AG04450 (cell line): ENCODE measurements at regions of chr22 and their contacts with region 1.

Region 1: DNA sequence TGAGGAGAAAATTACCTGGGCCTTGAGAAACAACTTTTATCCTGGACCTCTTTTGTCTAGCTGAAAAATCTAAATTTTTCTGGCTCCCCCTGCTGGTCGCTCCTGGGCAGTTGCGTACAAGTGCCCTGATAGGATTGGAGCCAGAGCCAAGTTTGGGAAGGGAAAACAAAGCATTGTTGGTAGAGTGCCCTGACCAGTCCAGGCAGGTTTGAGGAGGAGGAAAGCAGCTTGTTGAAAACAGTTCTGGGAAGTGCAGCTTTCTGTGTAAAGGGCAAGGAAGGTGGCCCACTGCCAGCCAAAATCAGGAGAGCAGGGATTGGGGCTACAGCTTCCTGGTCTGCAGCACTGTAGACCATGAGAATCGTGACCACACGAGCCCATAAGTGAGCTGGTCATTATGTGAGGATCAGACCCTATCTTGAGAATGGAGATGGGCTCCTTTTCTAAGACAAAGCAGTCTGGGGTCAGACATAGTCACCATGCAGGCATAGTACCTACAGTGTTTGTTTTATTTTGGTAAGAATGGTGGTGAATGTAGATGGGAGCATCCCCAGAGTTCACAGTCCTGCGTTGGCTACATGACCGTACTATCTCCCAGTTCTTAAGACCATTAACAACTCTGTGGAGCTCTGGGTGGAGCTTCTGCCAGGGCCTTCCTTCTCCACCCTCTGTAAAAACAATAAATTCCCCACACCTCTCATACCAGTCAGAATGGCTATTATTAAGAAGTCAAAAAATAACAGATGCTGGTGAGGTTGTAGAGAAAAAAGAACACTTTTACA is 21.3 kb upstream of the PIK3IP1 start:
- DNase-seq: peak; percentile 33
- H3K4me3 ChIP-seq: no peak overlapping the region
- H3K27ac ChIP-seq: no peak overlapping the region
- H3K27me3 ChIP-seq: no peaks in the 10 kb centered on the region
- CTCF ChIP-seq: peak; percentile 91

Region 2: DNA sequence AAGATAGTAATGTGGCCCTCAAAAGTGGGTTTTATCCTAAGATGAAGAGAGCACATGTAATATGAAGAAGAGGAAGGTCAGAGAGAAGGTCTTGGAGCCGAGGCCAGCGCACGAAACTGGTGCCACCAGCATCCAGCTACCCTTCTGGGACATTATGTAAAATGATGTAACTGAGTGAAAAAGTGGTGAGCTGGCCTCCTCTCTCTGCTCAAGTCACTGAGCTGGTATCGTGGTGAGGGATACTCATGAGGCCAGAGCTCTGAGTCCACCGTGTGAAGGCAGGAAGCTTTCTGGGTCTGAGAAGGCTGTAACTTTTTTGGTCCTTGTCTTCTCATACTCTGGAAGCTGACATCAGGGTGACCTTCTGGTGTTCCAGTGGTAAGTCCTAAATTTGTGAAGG is 128.5 kb before region 1 on chr22:
- CTCF ChIA-PET with region 1: no interaction called
- POLR2A ChIA-PET with region 1: no interaction called
- DNase-seq: no peak
- H3K4me3 ChIP-seq: no peak overlapping the region
- H3K27ac ChIP-seq: no peak overlapping the region
- H3K27me3 ChIP-seq: no peaks in the 10 kb centered on the region
- CTCF ChIP-seq: no peak

Region 3: DNA sequence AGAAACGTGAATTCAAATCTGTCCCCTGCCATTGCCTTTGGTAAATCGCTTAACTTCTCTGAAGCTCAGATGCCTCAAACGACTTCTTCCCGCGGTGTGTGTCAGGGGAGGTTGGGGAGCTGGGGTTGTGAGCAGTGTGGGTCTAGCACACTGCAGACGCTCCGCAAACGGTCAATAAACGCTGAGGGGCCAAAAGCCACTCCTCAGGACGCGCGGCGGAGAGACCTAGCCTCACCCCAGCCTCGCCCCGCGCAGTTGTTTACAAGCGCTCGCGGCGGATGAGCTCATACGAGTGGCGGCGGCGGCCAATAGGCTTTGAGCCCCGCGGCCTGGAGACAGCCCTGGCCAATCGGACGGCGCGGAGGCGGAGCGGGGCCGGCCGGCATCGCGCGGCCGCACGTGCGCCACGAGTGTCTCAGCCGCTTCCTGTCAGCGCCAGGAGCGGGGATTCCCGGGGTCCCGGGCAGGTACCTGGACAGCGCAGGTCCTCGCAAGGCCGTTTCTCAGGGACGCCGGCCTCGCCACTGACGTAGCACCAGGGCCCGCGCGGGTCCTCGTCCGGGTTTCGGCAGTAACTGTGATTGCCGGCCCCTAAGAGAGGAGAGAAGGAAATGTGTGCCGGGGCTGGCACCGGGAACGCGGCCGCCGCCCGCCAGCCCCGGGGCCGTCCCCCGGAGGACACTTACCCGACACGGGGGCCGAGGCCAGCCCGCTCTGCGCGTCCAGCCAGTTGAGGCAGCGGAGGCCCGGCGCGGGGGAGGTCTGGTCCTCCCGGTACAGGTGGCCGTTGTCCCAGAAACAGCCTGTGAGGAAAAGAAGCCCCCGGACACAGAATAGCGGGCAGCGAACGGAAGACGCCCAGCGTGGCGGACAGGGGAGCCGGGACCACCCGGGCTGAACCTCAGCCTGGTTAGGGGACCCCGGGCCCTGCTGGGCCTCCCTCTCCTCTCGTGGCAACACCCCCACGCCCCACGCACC is 22.8 kb before region 1 on chr22:
- CTCF ChIA-PET with region 1: interaction called, 100 read pairs
- POLR2A ChIA-PET with region 1: interaction called, 3 read pairs
- DNase-seq: peak; percentile 57
- H3K4me3 ChIP-seq: peak overlapping the region; percentile 87
- H3K27ac ChIP-seq: peak overlapping the region; percentile 61
- H3K27me3 ChIP-seq: no peaks in the 10 kb centered on the region
- CTCF ChIP-seq: no peak

Region 4: DNA sequence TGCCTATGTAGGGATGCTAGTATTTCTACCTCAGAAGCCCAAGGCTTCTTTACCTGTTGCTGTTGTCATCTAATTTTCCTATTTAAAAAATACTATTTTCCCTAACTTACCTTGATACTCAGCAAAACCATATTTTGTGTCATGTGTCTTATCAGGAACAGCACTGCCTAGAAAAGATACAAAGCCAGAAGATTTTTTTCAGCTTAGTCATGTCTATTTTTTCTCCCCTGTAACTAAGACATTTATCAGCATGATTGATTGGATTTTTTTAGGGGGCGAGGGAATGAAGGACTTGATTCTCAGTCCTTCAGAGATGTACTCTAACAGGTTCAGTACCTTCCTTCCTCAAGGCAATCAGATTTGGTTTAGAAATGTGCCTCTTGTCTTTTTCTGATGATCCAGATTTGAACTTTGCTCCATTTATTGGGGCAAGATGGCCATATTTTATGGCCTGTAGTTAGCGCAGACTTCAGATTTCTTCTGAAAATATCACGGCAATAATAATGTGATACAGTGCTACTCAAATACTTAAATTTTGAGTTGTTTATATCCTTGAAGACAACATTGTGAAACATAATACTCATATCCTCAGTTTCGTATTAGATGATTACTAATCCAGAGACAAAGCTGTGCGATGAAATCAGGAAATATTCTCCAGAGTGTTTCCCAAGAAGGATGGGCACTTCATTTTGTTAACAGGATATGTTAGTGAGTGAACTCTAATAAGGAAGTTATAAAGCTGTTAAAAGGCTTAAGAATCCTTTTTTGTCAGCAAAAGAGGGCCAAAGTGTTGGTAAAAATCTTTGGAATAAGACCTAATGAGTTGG is 17.5 kb before region 1 on chr22:
- CTCF ChIA-PET with region 1: interaction called, 100 read pairs
- POLR2A ChIA-PET with region 1: no interaction called
- DNase-seq: no peak
- H3K4me3 ChIP-seq: no peak overlapping the region
- H3K27ac ChIP-seq: no peak overlapping the region
- H3K27me3 ChIP-seq: no peaks in the 10 kb centered on the region
- CTCF ChIP-seq: no peak

Region 5: DNA sequence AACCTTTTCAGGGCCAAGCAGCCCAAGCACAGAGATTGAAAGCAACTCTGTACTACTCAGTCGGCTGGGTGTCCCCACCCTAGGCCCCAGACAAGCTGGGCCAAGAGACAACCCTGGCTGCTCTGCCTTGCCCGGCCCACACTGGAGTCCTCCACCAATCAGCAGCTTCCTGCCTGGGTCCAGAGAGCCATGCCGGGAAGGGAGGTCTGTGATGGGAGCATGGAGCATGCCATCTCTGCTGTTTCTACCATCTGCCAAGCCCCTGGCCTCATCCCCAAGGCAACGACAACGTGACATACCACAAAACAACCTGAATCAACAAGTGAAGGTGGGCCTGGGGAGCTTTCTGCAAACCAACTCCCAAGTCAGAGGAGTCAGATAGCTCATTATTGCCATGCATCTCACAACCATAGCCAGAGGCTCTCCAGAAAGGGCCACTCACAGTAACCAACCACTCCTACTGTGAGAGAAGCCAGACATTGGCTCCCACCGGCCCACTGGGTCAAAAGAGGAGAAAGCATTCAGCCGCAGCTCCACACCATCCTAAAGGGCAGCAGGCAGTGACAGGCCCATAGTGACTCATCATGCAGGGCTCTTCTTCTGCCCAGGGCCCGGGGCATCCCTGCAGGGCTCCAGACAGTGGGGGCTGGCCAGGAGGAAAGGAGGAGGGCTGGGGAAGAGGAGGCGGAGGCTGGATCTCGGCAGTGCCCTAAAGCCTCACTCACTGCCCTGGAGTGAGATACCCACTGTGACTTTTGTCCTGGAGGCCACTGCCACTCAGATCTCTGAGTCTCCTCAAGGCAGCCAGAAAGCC is 14.5 kb after region 1 on chr22:
- CTCF ChIA-PET with region 1: interaction called, 38 read pairs
- POLR2A ChIA-PET with region 1: no interaction called
- DNase-seq: no peak
- H3K4me3 ChIP-seq: no peak overlapping the region
- H3K27ac ChIP-seq: no peak overlapping the region
- H3K27me3 ChIP-seq: no peaks in the 10 kb centered on the region
- CTCF ChIP-seq: no peak